ENCODE measurements at regions of chr22 and their contacts with region 1.

Region 1: DNA sequence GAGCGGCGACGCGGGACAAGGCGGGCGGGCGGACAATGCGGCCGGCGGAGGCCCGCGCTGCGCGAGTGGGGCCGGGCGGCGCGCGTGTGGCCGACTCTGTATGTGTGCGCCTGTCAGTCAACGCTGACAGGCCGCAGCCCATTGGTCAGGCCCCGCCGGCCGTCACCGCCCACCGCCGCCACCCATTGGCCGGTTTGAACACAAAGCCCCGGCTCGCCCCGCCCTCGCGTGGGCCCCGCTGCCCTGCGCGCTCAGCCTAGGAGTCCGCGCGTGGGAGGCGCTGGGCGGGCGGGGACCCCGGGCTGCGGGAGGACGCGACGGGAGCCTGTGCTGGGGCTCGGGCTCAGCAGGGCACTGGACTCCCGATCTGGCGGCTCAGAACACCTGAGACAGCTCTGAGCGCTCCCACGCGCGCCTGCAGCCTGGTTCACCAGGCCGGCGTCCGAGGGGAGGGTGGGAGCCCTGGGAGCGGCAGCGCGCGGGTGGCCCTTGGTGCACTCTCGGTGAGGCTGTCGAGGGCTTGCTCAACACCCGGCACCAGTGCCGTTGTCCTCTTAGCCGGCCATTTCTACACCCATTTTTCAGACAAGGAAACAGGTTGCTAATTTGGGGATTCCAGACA is at the start of gene SUN2:
- DNase-seq: peak; percentile 89 to 94
- ATAC-seq: peak; percentile 76 to 81
- H3K4me3 ChIP-seq: peak within 1 kb of the TSS; percentile 55 to 93 (median 74)
- H3K27ac ChIP-seq: peak within 1 kb of the TSS; percentile 93 to 100 (median 96)
- H3K4me1 ChIP-seq: peaks cover 34 to 38% of the 10 kb centered on the region in 2 donors
- H3K27me3 ChIP-seq: no peaks in the 10 kb centered on the region
- CTCF ChIP-seq: no peak
- POLR2A ChIP-seq: peak; percentile 89 to 94
- total RNA-seq, gene SUN2: 177 to 423 (median 312) TPM

Region 2: DNA sequence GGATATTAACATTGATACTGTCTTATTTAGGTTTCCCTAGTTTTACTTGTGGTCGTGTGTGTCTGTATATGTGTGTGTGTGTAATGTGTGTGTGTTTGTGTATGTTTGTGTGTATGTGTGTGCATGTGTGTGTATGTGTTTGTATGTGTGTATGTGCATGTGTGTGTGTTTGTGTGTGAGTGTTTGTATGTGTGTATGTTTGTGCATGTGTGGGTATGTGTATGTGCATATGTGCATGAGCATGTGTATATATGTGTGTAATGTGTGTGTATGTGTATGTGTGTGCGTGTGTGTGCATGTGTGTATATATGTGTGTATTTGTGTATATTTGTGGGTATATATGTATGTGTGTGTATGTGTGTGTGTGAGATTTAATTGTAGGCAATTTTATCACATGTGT is 55.2 kb after region 1 on chr22:
- in situ Hi-C with region 1: no loop called
- intact Hi-C with region 1: no loop called
- DNase-seq: no peak
- ATAC-seq: no peak
- H3K4me3 ChIP-seq: no peak overlapping the region
- H3K27ac ChIP-seq: no peak overlapping the region
- H3K4me1 ChIP-seq: no peaks in the 10 kb centered on the region
- H3K27me3 ChIP-seq: peaks cover 5 to 22% (median 10%) of the 10 kb centered on the region in 3 donors
- CTCF ChIP-seq: no peak
- POLR2A ChIP-seq: no peak

Region 3: GRCh38 chr22:39152511-39153219 is 396.6 kb after region 1 on chr22 and contains the start of gene CBX7:
- in situ Hi-C with region 1: no loop called
- intact Hi-C with region 1: loop called (anchors 1 kb)
- DNase-seq: peak; percentile 90 to 95
- ATAC-seq: peak; percentile 79 to 87
- H3K4me3 ChIP-seq: peak within 1 kb of the TSS; percentile 85 to 98 (median 97)
- H3K27ac ChIP-seq: peak within 1 kb of the TSS; percentile 94 to 99 (median 98)
- H3K4me1 ChIP-seq: peaks cover 29 to 31% of the 10 kb centered on the region in 2 donors
- H3K27me3 ChIP-seq: no peaks in the 10 kb centered on the region
- CTCF ChIP-seq: no peak
- POLR2A ChIP-seq: peak; percentile 87 to 96
- total RNA-seq, gene CBX7: 52.4 to 78.1 (median 62.3) TPM

Measured in gastrocnemius medialis (tissue), 4 donors.